Right ventricle myocardium inferior (tissue), 1 donor: ENCODE measurements at regions of chr1 and their contacts with region 1.

Region 1: GRCh38 chr1:25103164-25103795 is 129.0 kb downstream of the SYF2 start:
- DNase-seq: no peak
- ATAC-seq: peak; percentile 27

Region 2: DNA sequence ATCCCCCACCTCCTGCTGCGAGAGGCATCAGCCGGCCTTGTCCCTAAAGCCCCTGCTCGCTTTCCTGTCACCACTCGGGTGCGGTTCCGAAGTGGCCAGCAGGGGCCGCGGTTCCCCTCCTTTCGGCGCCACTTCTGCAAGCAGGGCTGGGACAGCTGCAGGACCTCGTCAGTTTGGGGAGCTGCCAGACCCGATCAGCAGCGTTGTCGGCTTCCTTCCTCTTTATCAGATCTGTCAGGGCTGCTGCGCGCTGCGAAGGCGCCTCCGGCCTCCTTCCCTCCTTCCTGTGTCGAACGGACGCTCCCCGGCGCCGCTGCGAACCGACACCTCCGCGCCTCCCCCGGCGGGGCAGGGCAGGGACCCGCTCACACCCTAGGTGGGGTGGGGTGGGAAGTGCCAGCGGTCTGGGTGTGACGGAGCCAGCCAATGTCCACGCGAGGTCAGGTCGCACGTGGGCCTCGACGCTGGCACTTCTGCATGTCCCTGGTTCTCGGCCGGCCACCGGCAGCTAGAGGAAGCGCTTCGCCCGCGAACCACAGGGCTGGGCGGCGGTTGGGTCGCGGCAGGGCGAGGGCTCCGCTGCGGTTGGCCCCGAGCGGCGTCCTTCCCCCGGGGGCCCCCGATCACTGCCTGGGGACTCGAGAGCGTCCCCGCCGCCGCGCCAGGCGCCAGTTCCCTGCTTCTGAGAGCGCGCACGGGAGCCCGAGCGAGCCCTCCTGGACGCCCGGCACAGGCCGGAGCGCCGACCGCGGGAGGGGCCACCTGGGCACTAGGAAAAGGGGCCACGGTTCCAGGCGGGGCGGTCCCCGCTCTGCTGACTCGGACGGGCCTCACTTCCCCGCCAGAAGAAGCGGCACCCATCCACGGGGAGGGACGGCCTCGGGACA is 255.0 kb before region 1 on chr1:
- intact Hi-C with region 1: loop called (anchors 5 kb)
- DNase-seq: peak; percentile 95
- ATAC-seq: peak; percentile 95

Region 3: DNA sequence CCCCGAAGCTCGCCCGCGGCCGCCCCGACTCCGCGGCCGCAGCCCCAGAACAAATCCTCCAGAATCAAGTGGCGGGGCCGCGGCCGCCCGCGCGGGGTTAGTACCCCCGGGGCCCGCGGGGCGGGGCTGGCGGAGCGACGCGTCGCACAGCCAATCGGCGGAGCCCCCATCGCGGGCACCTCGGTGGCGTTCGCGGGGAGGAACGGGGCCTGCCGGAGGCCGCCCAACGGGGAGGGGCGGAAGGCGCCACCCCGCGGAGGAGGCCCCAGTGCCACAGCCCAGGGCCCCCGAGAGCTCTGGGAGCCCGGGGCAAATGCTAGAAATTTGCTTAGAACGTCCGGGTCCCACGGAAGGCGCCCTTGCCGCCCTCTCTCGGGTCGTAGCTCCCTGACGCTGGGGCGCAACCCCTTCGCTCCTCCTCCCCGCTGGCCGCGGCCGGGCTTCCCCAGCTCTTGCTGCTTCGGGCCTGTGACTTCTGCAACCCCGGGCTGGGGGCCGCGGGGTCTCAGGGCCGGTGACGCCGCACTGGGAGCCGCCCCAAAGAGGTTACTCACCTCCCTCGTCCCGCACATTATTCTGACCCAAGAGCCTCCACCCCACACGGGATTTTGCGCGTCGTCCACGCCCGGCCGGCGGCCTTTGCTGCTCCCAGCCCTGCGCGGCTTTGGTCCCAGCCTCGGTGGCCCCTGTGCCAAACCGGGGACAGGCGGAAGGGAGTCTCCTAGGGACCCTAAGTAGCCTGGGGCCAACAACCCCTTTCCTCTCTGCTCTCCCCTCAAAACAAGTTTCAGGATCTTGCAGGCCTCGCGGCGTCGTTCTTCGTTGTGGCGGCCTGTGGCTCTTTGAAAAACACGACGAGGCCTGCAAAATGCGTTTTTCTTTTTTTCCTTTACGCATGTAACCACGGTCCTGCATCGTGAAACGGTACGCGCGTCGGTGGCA is 172.8 kb before region 1 on chr1 and contains the start of gene RUNX3:
- intact Hi-C with region 1: loop called (anchors 5 kb)
- DNase-seq: peak; percentile 88
- ATAC-seq: peak; percentile 49
- total RNA-seq, gene RUNX3: 1.8 TPM

Region 4: DNA sequence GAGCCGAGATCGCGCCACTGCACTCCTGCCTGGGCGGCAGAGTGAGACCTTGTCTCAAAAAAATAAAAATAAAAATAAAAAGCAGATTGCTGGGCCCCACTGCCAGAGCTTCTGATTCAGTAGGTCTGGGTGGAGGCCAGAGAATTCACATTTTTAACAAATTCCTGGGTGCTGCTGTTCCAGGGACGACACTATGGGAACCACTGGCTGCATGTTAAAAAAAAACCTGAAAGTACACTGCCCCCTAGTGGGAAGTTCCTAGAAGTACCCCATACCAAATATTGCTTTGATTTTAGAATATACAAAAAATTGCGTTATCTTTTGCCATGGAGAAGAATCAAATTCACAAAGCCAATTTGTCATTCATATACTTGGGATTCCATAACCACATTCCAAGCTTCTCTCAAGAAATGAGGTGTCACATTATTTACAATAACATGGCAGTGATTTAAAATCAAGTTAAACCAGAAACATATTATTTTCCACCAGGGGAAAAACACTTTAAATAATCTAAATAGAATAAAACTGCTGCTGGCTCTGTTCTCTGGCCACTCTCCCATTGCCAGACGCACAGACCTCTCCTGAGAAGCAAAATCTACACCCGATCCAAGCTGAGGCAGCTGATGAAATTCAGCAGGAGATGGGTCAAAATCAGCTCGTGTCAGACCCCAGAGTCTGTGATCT is 101.7 kb after region 1 on chr1:
- intact Hi-C with region 1: loop called (anchors 10 kb)
- DNase-seq: no peak
- ATAC-seq: peak; percentile 48